ENCODE measurements at regions of chr7 and their contacts with region 1.

Region 1: DNA sequence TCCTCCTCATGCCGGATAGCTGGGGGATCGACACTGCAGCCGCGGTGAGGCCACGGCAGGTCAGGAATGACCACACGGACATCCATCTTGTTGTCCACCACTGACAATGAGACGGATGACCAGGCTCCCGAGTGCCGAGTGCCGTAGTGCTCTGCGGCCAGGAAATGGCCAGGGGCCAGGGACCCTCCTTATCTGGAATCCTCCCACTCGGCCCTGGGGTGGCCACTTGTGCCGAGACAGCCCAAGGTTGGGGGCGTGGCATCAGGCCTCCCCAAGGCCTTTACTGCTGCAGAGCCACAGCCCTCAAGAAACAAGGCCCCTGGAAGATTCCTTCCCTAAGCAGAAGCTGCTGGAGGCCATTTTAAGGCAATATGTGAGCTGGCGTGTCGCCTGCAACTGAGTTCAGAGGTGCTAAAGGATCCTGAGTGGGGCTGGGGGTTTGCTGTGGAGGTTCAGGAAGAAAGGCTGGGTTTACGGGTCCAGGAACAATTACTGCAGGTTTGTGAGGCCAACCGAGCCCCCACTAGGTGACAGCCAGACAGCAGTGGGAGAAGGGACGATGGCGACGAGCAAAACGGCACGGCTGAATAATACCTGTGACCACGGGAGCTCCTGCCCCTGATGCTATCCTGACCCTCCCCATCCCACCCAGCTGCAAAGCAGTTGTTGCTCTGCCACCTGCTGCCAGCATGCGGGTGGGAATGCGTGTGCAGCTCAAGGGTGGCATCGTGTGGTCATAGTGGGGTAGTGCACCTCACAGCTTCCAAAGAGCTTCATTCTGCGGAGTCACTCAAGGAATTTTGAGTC is 31.6 kb upstream of the LEP start:
- DNase-seq: peak; percentile 83

Region 2: GRCh38 chr7:127708788-127709187 is 500.6 kb before region 1 on chr7:
- in situ Hi-C with region 1: loop called (anchors 25 kb)
- DNase-seq: peak; percentile 96

Region 3: DNA sequence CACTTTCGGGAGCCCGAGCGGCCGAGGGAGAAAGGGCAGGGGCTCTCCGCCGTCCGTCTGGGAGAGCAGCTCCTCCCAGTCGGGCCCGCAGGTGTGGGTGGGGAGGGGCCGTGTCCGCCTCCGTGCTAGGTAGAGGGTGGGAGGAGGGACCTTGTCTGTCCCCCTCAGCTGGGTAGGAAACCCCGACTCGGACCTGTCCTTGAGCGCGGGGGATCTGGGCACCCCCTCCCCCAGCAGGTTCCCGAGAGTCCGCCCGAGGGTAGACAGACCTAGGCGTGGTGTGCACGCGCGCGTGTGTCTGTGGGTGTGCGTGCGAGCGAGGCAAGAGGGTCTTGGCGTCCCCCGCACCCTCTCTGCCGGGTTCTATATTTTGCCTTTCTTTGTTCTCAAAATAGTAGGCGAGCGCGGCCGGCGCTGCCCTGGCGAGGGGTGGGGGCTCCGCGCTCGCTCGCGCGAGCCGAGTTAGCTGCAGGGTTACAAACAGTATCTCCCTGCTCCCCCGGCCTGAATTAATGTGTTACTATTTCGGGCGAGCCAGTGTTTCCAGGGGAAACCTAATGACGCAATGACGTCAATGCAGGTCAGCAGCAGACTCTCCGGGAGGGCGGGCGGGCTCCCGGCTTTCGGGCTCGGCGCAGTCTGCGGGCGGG is 42.3 kb before region 1 on chr7:
- in situ Hi-C with region 1: no loop called
- DNase-seq: peak; percentile 94

Measured in G401 (cell line).